ENCODE measurements at regions of chr9 and their contacts with region 1.

Region 1: GRCh38 chr9:27985714-27986113 is 412.4 kb upstream of the C9orf72 start:
- DNase-seq: no peak
- H3K4me3 ChIP-seq: no peak overlapping the region
- H3K27ac ChIP-seq: no peak overlapping the region
- H3K4me1 ChIP-seq: no peaks in the 10 kb centered on the region
- H3K27me3 ChIP-seq: no peaks in the 10 kb centered on the region
- CTCF ChIP-seq: no peak

Region 2: DNA sequence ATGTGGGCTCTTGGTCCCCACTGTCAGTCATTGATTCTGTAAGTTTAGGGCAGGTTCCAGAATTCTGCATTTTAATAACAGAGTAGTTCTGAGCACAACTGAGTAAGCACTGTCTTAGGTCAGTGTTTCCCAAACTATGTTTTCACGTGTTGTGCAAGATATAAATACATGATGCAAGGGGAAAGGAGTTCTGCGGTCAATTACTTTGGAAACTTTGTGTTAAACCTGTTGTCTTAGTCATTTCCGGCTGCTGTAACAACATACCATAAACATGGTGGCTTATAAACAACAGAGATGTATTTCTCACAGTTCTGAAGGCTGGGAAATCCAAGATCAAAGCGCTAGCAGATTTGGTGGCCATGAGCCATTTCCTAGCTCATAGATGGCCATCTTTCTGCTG is 758.5 kb before region 1 on chr9:
- CTCF ChIA-PET with region 1: no interaction called
- POLR2A ChIA-PET with region 1: no interaction called
- intact Hi-C with region 1: no loop called
- DNase-seq: no peak
- H3K4me3 ChIP-seq: no peak overlapping the region
- H3K27ac ChIP-seq: no peak overlapping the region
- H3K4me1 ChIP-seq: no peaks in the 10 kb centered on the region
- H3K27me3 ChIP-seq: no peaks in the 10 kb centered on the region
- CTCF ChIP-seq: no peak

Region 3: DNA sequence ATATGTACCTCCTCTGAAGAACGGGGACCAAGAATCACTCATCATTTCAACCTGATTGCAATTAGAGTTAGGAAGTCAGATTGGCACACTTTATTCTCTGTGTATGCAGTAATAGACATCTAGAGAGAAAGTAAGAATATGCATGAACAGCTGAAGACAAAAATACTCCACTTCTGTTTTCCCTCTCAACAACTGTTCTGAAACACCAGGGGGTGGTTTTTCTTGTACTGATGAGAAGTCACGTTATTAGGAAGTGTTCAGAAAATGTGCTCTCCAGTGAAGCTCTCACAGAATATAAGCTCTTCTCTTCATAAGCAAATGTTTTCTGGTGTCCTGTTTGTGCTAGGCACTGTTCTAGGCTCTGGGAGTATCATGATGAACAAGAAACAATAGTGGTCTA is 119.3 kb after region 1 on chr9:
- CTCF ChIA-PET with region 1: no interaction called
- POLR2A ChIA-PET with region 1: no interaction called
- intact Hi-C with region 1: no loop called
- DNase-seq: no peak
- H3K4me3 ChIP-seq: no peak overlapping the region
- H3K27ac ChIP-seq: no peak overlapping the region
- H3K4me1 ChIP-seq: no peaks in the 10 kb centered on the region
- H3K27me3 ChIP-seq: no peaks in the 10 kb centered on the region
- CTCF ChIP-seq: no peak

Region 4: DNA sequence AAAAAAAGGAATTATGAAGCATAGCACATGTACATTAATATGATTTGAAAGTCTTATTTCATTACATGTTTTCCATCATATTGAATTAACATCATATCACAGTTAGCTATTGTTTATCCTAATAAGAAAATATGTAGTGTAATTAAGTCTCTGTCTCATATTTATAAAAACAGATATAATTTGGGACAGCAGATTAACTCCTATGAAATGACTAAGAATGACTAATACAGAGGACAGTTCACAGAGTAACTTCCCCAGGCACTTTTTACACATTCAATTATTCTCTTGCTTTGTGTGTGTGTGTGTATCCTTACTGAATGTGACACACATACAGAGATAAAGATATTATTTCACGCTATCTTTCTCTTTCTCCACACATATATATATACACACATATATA is 1988.5 kb after region 1 on chr9:
- CTCF ChIA-PET with region 1: no interaction called
- POLR2A ChIA-PET with region 1: interaction called, 10 read pairs
- intact Hi-C with region 1: no loop called
- DNase-seq: no peak
- H3K4me3 ChIP-seq: no peak overlapping the region
- H3K27ac ChIP-seq: no peak overlapping the region
- H3K4me1 ChIP-seq: no peaks in the 10 kb centered on the region
- H3K27me3 ChIP-seq: no peaks in the 10 kb centered on the region
- CTCF ChIP-seq: no peak